Activated naive CD4-positive, alpha-beta T cell treated with anti-CD3 and anti-CD28 coated beads for 36 hours (primary cell): ENCODE measurements at regions of chr3 and their contacts with region 1.

Region 1: GRCh38 chr3:115341208-115341607 is 194.1 kb upstream of the ZBTB20 start:
- DNase-seq: no peak
- H3K4me3 Mint-ChIP-seq: no peak overlapping the region
- H3K27ac Mint-ChIP-seq: no peak overlapping the region
- H3K4me1 Mint-ChIP-seq: peaks cover 3% of the 10 kb centered on the region
- H3K27me3 Mint-ChIP-seq: no peaks in the 10 kb centered on the region

Region 2: DNA sequence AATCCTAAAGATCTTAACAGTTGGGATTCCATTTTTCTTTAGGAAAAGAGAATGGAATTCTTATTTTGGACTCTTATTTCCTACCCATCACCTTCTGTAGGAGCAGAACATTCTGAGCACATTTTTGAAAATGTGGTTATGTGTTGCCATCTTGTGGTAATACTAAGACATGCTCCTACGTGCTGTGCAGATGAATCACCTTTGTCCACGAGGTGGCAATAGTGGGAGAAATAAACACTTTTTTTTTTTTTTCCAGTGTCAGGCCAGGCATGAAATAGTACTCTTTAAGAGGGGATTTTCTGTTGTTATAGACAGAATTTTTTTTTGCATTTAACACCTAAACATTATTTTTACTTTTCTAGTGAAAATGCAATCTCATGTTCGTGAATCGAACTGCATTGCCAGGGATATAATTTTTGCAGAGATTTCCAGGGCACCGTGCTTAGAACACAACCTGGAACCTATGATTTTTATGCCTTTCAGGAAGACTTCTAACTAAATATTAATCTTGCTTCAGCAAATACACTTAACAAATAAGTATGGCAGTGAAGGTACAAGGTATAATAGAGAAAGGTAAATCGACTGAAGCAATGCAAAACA is 478.7 kb after region 1 on chr3:
- CTCF ChIA-PET with region 1: no interaction called
- intact Hi-C with region 1: loop called (anchors 10 kb)
- DNase-seq: peak; percentile 79
- H3K4me3 Mint-ChIP-seq: no peak overlapping the region
- H3K27ac Mint-ChIP-seq: no peak overlapping the region
- H3K4me1 Mint-ChIP-seq: no peaks in the 10 kb centered on the region
- H3K27me3 Mint-ChIP-seq: no peaks in the 10 kb centered on the region